ENCODE measurements at regions of chr10 and their contacts with region 1.

Region 1: DNA sequence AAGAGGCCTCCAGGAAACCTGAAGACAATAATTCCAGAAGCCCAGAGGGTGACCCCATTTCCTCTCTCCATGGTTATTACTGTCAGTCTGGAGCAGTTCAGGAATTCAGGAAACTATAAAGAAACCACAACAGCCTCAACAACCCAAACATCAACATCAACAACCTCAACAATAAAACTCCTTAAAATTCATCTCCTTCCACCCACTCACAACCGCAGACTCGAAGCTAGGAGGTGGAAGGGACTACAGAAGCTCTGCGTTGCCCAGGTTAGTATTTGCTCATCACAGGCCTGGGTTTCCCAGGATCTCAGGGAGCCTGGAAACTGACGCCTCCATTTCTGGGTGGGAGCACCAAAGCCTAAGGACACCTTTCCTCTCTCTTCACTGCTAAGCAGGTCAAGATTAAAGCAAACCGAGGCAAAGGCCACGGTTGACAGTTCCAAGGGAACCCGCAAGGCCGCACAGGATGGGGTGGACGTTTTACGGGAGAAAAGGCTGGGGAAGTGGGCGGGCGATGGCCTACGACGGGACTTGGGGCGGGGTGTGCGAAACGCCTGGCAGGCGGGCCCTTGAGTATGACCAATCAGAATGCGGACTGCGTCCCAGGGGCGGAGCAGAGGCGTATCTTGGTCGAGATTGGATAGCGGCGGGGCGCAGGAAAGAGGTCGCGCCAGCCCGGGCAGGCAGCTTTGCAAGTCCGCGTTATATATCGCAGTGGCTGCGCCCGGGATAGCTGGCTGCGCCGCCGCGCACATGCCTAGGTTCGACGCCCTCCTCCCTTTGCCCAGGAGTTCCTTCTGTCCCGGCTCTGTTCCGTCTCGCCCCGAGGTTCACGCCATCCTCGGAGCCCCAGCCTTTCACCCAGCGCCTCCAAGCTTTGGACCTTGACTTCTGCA is at the start of gene ELOVL3:
- DNase-seq: peak; percentile 94
- H3K4me3 Mint-ChIP-seq: peak within 1 kb of the TSS; percentile 47
- H3K27ac Mint-ChIP-seq: no peak within 1 kb of the TSS
- H3K4me1 Mint-ChIP-seq: peaks cover 13% of the 10 kb centered on the region
- H3K27me3 Mint-ChIP-seq: peaks cover 40% of the 10 kb centered on the region
- total RNA-seq, gene ELOVL3: 0.21 to 0.56 TPM

Region 2: DNA sequence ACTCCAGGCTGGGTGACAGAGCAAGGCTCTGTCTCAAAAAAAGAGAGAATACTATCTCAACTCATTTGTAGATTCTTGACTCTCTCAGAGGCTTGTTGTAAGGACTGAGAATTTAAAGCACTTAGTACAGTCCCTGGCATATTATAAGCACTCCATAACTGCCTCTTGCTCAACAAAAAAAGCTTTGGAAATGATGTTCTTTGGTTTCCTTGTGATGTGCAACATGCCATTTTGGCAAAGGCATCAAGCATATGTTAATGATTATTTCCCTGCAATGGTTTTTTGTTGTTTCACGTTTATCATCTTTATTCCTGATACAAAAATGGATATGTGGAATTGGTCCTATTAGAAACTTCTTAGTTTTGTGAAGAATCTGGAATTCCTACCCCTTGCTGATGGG is 58.0 kb before region 1 on chr10:
- CTCF ChIA-PET with region 1: interaction called, 148 read pairs
- POLR2A ChIA-PET with region 1: interaction called, 3 read pairs
- intact Hi-C with region 1: loop called (anchors 1 kb)
- DNase-seq: no peak
- H3K4me3 Mint-ChIP-seq: no peak overlapping the region
- H3K27ac Mint-ChIP-seq: no peak overlapping the region
- H3K4me1 Mint-ChIP-seq: peaks cover 5% of the 10 kb centered on the region
- H3K27me3 Mint-ChIP-seq: no peaks in the 10 kb centered on the region

Region 3: DNA sequence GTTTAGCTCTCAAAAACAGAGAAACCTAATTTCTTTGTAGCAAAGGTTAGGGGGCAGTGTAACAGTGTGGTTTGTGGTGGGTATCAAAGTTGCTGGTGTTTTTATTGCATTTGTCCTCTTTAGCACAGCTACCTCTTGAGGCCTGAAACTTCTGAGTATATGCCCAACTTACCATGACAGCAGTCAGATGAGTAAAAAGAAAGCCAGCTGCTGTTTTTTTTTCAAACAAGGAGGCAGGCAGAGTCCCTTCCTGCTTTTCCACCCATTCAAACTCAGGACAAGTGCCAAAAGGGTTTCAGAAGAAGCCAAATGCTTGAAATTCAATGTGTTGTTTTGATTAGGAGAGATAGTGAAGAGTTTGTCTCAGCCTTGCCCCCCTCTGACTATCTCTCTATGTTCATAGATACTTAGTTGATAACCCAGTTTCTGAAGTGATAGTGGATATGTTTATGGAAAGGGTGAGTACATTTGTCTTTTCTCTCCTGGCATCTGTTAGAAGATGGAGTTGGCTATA is 42.5 kb after region 1 on chr10:
- CTCF ChIA-PET with region 1: interaction called, 42 read pairs
- POLR2A ChIA-PET with region 1: no interaction called
- intact Hi-C with region 1: no loop called
- DNase-seq: no peak
- H3K4me3 Mint-ChIP-seq: peak overlapping the region; percentile 41
- H3K27ac Mint-ChIP-seq: peak overlapping the region; percentile 97
- H3K4me1 Mint-ChIP-seq: peaks cover 73% of the 10 kb centered on the region
- H3K27me3 Mint-ChIP-seq: no peaks in the 10 kb centered on the region

Region 4: GRCh38 chr10:102342958-102343357 is 117.1 kb after region 1 on chr10:
- CTCF ChIA-PET with region 1: interaction called, 1,053 read pairs
- POLR2A ChIA-PET with region 1: interaction called, 4 read pairs
- intact Hi-C with region 1: loop called (anchors 1 kb)
- DNase-seq: no peak
- H3K4me3 Mint-ChIP-seq: no peak overlapping the region
- H3K27ac Mint-ChIP-seq: peak overlapping the region; percentile 60
- H3K4me1 Mint-ChIP-seq: peaks cover 39% of the 10 kb centered on the region
- H3K27me3 Mint-ChIP-seq: no peaks in the 10 kb centered on the region

Region 5: DNA sequence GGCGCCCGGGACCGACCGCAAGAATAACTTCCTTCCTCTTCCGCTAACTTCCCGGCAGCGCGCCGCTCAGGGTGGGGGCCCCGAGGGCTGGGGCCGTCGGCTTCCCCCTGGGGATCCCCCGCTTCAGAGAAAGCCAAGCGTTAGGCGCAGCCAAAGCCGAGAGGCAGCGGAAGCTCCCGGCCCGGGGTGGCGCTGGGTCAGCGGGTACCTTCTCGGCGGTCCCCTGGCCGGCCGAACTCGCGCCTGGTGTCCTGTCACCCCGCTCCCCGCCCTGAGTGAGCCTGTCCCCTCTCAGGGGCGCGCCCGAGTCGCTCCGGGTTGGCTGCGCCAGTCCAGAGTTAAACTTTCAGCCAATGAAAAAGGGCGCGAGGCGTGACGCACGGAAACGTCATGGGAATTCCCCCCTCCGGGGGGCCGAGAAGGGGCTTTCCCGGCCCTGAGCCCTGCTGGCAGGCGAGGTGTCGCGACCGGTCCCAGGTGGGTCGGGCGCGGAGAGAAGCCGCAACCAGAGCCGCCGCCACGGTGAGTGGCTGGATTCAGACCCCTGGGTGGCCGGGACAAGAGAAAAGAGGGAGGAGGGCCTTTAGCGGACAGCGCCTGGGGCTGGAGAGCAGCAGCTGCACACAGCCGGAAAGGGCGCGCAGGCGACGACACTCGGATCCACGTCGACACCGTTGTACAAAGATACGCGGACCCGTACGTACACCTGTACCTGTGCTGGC is 168.3 kb after region 1 on chr10:
- CTCF ChIA-PET with region 1: interaction called, 213 read pairs
- POLR2A ChIA-PET with region 1: interaction called, 16 read pairs
- intact Hi-C with region 1: loop called (anchors 2 kb)
- DNase-seq: peak; percentile 99
- H3K4me3 Mint-ChIP-seq: peak overlapping the region; percentile 94
- H3K27ac Mint-ChIP-seq: peak overlapping the region; percentile 99
- H3K4me1 Mint-ChIP-seq: peaks cover 39% of the 10 kb centered on the region
- H3K27me3 Mint-ChIP-seq: no peaks in the 10 kb centered on the region

Region 6: DNA sequence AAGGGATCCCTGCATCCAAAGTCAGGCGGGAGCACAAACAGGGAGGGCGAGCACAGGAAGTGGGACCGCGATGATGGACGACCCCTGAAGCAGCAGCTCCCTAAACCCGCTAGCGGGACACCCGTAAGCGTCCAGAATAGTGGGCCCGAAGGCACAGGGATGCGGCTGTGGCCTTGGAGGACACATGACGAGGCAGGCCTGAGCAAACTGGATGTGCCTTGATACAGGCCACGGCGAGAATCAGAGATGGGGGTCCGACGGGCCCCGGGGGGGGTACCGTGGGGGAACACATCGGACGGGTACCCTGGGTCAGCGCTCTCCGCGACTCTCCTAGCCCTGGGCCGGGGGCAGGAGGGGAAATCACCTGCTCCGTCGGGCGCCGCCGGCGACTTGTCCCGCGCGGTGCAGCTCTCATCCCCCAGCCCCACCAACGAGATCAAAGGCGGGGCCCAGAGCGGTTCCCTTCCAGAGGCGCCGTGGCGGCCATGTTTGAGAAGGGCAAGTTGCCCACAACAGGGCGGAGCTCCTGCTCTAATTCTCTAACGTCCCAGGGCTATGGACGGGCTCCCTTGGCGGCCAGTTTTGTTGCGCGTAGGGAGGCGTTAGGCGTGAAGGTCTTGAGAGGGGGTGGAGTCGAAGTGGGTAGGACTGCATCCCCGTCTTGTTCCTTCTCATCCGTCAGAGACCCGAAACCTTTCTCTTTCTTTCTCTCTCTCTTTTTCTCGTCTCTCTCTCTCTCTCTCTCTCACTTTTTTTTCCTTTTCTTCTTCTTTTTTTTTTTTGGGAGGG is 206.5 kb after region 1 on chr10 and contains the start of gene CUEDC2:
- CTCF ChIA-PET with region 1: interaction called, 12 read pairs
- POLR2A ChIA-PET with region 1: no interaction called
- intact Hi-C with region 1: no loop called
- DNase-seq: peak; percentile 99
- H3K4me3 Mint-ChIP-seq: peak within 1 kb of the TSS; percentile 84
- H3K27ac Mint-ChIP-seq: peak within 1 kb of the TSS; percentile 88
- H3K4me1 Mint-ChIP-seq: peaks cover 42% of the 10 kb centered on the region
- H3K27me3 Mint-ChIP-seq: no peaks in the 10 kb centered on the region
- total RNA-seq, gene CUEDC2: 68.6 to 68.9 TPM

Region 7: GRCh38 chr10:102503281-102504220 is 277.7 kb after region 1 on chr10 and contains the start of gene SUFU:
- CTCF ChIA-PET with region 1: interaction called, 21 read pairs
- POLR2A ChIA-PET with region 1: no interaction called
- intact Hi-C with region 1: no loop called
- DNase-seq: peak; percentile 98
- H3K4me3 Mint-ChIP-seq: peak within 1 kb of the TSS; percentile 95
- H3K27ac Mint-ChIP-seq: peak within 1 kb of the TSS; percentile 79
- H3K4me1 Mint-ChIP-seq: peaks cover 23% of the 10 kb centered on the region
- H3K27me3 Mint-ChIP-seq: no peaks in the 10 kb centered on the region
- total RNA-seq, gene SUFU: 8.2 to 10.0 TPM

Measured in activated CD4-positive, alpha-beta memory T cell treated with anti-CD3 and anti-CD28 coated beads for 36 hours (primary cell).